GM10248 (cell line): ENCODE measurements at regions of chr19 and their contacts with region 1.

Region 1: GRCh38 chr19:47348819-47349795 is at the start of gene DHX34:
- DNase-seq: peak; percentile 100
- CTCF ChIP-seq: peak; percentile 93

Region 2: DNA sequence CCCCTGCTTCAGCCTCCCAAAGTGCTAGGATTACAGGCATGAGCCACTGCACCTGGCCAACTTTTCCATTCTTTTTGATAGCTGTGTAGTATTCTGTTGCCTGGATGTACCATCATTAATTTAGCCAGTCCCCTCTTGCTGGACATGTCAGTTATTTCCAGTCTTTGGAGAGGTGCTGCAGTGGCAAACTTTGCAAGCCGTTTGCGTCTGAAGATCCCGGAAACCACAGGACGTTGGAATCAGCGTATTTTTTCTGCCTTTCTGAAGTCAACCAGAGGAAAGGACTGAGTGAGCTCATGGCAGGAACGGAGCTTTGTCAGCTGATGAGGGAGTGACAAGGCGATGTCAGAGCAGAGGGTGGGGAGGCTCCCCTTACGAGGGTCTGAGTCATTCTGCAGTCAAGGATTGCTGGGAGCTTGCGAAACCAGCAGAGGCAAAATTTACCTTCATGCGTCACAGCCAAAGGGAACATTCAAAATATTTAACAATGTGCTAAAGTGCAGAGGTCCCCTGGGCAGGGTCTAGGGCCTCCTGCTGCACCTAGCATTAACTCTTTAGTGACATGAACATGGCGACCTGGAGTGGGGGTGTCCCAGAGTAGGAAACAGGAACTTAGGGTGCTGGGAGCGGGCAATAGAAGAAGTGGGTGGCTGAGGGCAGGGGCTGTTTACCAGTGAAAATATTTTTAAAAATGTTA is 33.8 kb before region 1 on chr19:
- CTCF ChIA-PET with region 1: interaction called, 10 read pairs
- POLR2A ChIA-PET with region 1: interaction called, 4 read pairs
- DNase-seq: no peak
- CTCF ChIP-seq: no peak

Region 3: DNA sequence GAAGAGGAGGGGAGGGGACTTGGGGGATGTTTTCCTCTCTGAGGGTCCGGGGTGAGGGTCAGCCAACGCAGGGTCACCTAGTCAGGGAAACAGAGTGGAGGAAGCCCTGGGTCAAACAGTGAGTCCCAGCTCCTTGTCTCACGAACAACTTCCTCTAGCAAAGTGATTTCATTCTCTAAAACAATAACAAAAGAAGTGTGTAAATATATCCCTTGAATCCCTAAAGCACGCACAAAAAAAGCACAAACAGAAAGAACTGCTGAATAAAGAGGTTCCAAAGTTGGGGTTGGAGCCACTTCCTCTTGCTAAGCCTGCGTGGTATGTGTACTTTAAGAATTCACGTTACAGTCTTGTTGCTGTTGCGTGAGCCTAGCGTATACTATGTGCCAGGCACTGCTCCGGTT is 18.6 kb before region 1 on chr19:
- CTCF ChIA-PET with region 1: interaction called, 39 read pairs
- POLR2A ChIA-PET with region 1: no interaction called
- DNase-seq: no peak
- CTCF ChIP-seq: no peak

Region 4: DNA sequence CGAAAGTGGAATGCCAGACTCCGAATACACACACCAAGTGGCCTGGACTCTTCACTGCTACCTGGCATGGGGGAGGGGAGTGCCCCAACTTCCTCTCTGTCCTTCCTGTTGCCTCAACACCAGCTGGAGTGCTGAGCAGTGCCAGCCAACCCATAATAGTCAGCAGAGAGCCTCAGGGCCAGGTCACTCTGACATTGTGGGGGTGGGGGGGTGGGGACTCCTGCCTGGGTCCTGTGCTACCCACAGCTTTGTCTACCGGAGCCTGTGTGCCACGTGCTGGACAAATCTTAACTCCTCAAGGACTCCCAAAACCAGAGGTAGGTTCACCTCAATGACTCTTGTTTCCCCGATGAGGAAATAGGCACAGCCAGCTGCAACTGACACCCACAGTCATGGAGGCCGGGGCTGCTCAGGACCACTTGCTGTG is 12.2 kb before region 1 on chr19:
- CTCF ChIA-PET with region 1: interaction called, 39 read pairs
- POLR2A ChIA-PET with region 1: no interaction called
- DNase-seq: no peak
- CTCF ChIP-seq: no peak